ENCODE measurements at regions of chr3 and their contacts with region 1.

Region 1: GRCh38 chr3:8273479-8273878 is 228.1 kb upstream of the LMCD1 start:
- DNase-seq: no peak
- H3K4me3 ChIP-seq: no peak overlapping the region
- H3K27ac ChIP-seq: no peak overlapping the region
- H3K4me1 ChIP-seq: no peaks in the 10 kb centered on the region
- H3K27me3 ChIP-seq: no peaks in the 10 kb centered on the region
- CTCF ChIP-seq: no peak
- POLR2A ChIP-seq: no peak

Region 2: DNA sequence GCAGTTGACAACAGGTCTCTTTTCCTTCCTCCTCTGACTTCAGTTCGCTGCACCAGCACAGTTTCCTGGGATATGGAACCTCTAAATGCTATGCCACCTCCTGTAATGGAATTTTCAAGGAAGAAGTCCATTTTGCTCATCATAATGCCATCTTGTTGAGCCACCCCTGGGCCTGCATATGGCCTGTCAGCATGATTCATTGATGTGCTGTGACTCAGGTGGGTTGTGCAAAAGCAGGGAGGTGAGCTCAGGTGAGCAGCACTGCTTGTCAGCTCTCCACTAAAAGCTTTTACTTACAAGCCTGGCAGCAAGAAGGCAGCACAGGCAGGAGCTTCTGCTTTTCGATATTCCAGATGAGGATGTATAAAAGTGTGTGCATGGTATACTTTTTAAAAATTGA is 19.0 kb before region 1 on chr3:
- intact Hi-C with region 1: loop called (anchors 1 kb)
- DNase-seq: no peak
- H3K4me3 ChIP-seq: no peak overlapping the region
- H3K27ac ChIP-seq: no peak overlapping the region
- H3K4me1 ChIP-seq: no peaks in the 10 kb centered on the region
- H3K27me3 ChIP-seq: no peaks in the 10 kb centered on the region
- CTCF ChIP-seq: no peak
- POLR2A ChIP-seq: no peak

Measured in breast epithelium (tissue), 4 donors.